ENCODE measurements at regions of chr5 and their contacts with region 1.

Region 1: DNA sequence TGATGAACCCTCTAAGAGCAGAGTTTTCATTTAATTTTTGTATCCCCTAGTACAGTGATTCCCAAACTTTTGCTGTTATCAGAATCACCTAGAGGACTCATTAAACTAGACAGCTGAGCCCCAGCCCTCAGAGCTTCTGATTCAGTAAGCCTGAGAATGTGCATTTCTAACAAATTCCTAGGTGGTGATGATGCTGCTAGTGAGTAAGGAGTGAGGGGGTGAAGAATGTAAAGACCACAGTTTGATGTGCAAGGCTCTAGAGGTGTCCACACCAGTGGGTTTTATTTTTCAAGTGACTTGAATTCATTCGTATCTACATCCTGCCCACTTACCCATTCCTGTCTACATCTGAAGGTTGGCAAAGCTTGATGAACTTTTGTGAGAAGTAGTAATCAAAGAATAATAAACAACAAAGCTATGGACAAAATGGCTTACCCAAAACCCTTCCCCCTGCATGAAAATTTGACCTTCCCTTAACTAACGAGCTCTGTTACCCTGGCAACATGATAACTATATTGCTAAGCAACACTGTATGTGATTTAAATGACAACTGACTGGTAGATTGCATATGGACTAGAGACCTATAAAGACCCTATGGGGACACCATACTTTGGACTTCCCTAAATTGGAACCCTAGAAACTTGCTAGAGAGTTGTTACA is 35.2 kb downstream of the DTWD2 start:
- DNase-seq: no peak
- ATAC-seq: no peak
- H3K4me3 ChIP-seq: no peak overlapping the region
- H3K27ac ChIP-seq: no peak overlapping the region
- H3K4me1 ChIP-seq: no peaks in the 10 kb centered on the region
- H3K27me3 ChIP-seq: no peaks in the 10 kb centered on the region
- CTCF ChIP-seq: no peak

Region 2: DNA sequence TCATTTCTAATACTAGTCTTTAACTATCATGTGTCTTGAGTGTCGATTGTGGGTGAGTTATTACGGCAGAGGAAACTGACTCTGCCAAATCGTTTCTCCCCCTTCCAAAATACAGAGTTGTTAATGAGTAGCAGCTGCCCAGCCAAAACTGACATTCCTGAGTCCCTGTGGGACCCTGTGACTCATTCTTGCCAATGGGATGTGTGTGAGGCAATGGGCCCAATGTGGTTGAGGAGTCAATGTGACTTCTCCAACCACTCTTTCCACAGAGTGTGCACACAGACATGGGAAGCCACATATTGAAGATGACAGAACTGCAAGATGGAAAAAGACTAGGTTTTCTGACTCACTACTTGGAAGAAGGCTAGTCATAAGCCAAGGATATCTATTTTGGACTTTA is 399.5 kb before region 1 on chr5:
- CTCF ChIA-PET with region 1: no interaction called
- POLR2A ChIA-PET with region 1: no interaction called
- in situ Hi-C with region 1: no loop called
- intact Hi-C with region 1: no loop called
- DNase-seq: no peak
- ATAC-seq: no peak
- H3K4me3 ChIP-seq: no peak overlapping the region
- H3K27ac ChIP-seq: no peak overlapping the region
- H3K4me1 ChIP-seq: no peaks in the 10 kb centered on the region
- H3K27me3 ChIP-seq: no peaks in the 10 kb centered on the region
- CTCF ChIP-seq: no peak

Region 3: DNA sequence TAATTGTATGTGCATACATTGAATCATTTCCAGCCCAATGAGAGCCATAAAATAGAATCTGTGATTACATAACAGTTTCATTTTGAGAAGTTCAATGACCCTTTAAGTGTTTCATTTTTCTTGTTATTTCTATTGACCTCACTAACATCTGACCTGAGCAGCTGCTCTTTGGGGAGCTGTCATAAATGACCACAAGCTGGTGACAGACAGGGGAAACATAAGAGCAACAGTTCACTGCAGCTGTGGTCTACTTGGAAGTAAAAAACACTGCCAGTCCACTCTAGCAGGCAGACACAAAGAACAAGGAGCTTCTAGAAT is 230.1 kb before region 1 on chr5:
- CTCF ChIA-PET with region 1: no interaction called
- POLR2A ChIA-PET with region 1: no interaction called
- in situ Hi-C with region 1: no loop called
- intact Hi-C with region 1: no loop called
- DNase-seq: no peak
- ATAC-seq: no peak
- H3K4me3 ChIP-seq: no peak overlapping the region
- H3K27ac ChIP-seq: no peak overlapping the region
- H3K4me1 ChIP-seq: no peaks in the 10 kb centered on the region
- H3K27me3 ChIP-seq: no peaks in the 10 kb centered on the region
- CTCF ChIP-seq: no peak

Region 4: DNA sequence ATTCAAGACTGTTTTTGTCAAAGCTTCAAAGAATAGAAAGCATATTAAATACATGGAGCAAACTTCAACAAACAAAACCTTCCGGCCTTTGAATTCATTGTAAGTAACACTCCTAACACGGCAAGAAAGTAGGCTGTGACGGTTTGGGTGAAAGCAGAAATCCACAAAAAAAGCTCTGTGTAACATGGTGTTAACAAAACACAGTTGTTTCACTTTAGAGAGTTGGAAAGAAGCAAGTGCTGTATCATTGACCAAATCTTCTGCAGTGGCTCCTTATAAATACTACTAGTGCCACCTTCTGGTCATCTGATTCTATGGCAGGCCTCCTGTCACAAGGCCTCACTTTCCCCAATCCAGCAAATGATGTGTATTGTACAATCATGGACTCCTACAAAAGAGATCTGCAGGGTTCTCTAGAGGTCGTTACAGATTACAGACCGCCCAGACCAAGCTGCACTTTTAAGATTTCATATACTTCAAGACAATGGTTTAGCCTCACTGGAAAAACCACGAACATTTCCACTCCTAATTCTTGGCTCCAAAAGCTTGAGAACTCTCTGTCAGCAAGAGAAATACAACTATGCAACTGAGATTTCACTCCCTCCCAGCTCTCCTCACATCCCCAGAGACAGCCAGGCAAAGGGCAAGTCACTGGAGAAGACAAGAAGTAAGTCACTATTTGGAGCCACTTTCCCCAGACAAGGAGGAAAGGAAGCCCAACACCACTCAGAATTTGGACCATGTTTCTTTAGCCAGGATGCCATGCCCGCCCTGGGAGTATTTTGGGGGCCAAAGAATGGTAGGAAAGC is 161.0 kb before region 1 on chr5:
- CTCF ChIA-PET with region 1: no interaction called
- POLR2A ChIA-PET with region 1: no interaction called
- in situ Hi-C with region 1: no loop called
- intact Hi-C with region 1: loop called (anchors 5 kb)
- DNase-seq: peak; percentile 32
- ATAC-seq: peak; percentile 85
- H3K4me3 ChIP-seq: no peak overlapping the region
- H3K27ac ChIP-seq: no peak overlapping the region
- H3K4me1 ChIP-seq: no peaks in the 10 kb centered on the region; the same call in 1 of the 2 replicates
- H3K27me3 ChIP-seq: no peaks in the 10 kb centered on the region
- CTCF ChIP-seq: peak; percentile 83

Region 5: GRCh38 chr5:119190470-119191095 is 237.5 kb after region 1 on chr5:
- CTCF ChIA-PET with region 1: no interaction called
- POLR2A ChIA-PET with region 1: no interaction called
- in situ Hi-C with region 1: no loop called
- intact Hi-C with region 1: no loop called
- DNase-seq: no peak
- ATAC-seq: no peak
- H3K4me3 ChIP-seq: no peak overlapping the region
- H3K27ac ChIP-seq: no peak overlapping the region
- H3K4me1 ChIP-seq: no peaks in the 10 kb centered on the region
- H3K27me3 ChIP-seq: no peaks in the 10 kb centered on the region
- CTCF ChIP-seq: no peak